ENCODE measurements at regions of chrX and their contacts with region 1.

Region 1: GRCh38 chrX:1246816-1247215 is 21.8 kb upstream of the CSF2RA start:
- DNase-seq: peak; percentile 57
- ATAC-seq: peak; percentile 64
- H3K4me3 ChIP-seq: no peak overlapping the region
- H3K27ac ChIP-seq: no peak overlapping the region
- H3K4me1 ChIP-seq: peaks cover 14% of the 10 kb centered on the region
- H3K27me3 ChIP-seq: no peaks in the 10 kb centered on the region
- CTCF ChIP-seq: peak; percentile 81 to 86 (median 85)
- EP300 ChIP-seq: no peak
- POLR2A ChIP-seq: no peak
- RAD21 ChIP-seq: peak; percentile 96

Region 2: DNA sequence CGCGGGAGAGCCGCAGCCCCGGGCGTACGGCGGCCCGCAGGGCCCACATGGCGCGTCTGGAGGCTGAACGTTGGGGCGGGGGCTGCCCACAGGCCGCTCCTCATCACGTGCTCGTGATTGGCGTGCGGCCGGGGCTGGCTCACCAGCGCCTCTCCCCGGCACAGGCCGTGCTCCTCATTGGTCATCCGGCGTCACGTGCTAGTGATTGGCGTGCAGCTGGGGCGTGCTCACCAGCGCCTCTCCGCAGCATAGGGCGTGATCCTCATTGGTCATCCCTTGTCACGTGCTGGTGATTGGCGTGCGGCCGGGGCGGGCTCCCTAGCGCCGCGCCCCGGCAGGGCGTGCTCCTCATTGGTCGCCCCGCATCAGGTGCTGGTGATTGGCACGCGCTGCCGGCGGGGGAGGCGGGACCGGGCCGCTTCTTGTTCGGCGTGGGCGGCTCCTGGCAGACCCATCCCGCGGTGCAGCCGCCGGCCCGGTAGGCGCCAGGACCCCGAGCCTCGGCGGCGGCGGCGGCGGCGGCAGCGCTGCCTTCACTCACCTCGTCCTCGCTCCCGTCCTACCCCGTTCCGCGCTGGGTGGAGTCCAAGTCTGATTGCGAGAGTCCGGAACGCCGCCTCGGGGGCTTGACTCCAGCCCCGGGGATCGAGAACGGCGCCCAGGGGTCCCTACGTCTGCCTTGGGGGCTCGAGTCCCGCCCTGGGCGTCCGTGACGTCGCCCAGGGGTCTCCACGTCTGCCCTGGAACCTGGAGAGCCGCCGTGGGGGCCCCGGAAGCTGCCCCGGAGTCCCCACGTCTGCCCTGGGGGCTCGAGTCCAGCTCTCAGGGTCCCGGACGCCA is 927.9 kb before region 1 on chrX and contains the start of gene GTPBP6:
- CTCF ChIA-PET with region 1: no interaction called
- POLR2A ChIA-PET with region 1: no interaction called
- RAD21 ChIA-PET with region 1: no interaction called
- SMC1A ChIA-PET with region 1: no interaction called
- in situ Hi-C with region 1: no loop called
- intact Hi-C with region 1: loop called (anchors 10 kb)
- DNase-seq: peak; percentile 99
- ATAC-seq: peak; percentile 84
- H3K4me3 ChIP-seq: peak within 1 kb of the TSS; percentile 86
- H3K27ac ChIP-seq: peak within 1 kb of the TSS; percentile 95
- H3K4me1 ChIP-seq: peaks cover 7% of the 10 kb centered on the region
- H3K27me3 ChIP-seq: no peaks in the 10 kb centered on the region
- CTCF ChIP-seq: peak in 1 of 3 experiments; percentile 35; a peak in 2 of 6 replicates
- EP300 ChIP-seq: no peak
- POLR2A ChIP-seq: peak; percentile 85
- RAD21 ChIP-seq: no peak
- polyA plus RNA-seq, gene GTPBP6: 0.31 to 1.9 TPM

Region 3: DNA sequence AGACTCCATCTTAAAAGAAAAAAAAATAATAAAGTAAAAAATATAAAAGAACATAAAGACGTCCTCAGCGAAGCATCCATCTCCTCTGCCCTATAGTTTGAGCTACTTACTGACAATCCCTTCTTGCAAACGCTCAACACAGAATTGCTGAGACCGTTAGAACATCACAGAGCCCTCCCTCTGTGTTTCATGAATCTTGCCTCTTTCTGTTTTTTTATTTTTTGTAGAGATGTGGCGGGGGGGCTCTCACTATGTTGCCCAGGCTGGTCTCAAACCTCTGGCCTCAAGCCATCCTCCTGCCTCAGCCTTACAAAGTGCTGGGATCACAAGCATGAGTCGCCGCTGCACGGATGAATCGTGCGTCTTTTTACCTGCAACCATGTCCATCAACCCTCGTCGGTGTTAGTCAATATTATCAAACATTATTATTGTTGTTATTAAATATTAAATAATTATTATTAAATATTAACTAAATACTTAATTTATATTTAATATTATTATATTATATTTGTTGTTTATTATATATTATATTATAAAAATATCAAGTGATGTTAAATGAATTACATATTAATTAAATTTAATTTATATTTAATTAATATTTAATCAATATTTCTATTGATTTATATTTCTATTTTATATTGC is 235.1 kb before region 1 on chrX:
- CTCF ChIA-PET with region 1: no interaction called
- POLR2A ChIA-PET with region 1: no interaction called
- RAD21 ChIA-PET with region 1: no interaction called
- SMC1A ChIA-PET with region 1: no interaction called
- in situ Hi-C with region 1: no loop called
- intact Hi-C with region 1: no loop called
- DNase-seq: no peak
- ATAC-seq: no peak
- H3K4me3 ChIP-seq: no peak overlapping the region
- H3K27ac ChIP-seq: no peak overlapping the region
- H3K4me1 ChIP-seq: no peaks in the 10 kb centered on the region
- H3K27me3 ChIP-seq: no peaks in the 10 kb centered on the region
- CTCF ChIP-seq: no peak
- EP300 ChIP-seq: no peak
- POLR2A ChIP-seq: no peak
- RAD21 ChIP-seq: no peak

Region 4: DNA sequence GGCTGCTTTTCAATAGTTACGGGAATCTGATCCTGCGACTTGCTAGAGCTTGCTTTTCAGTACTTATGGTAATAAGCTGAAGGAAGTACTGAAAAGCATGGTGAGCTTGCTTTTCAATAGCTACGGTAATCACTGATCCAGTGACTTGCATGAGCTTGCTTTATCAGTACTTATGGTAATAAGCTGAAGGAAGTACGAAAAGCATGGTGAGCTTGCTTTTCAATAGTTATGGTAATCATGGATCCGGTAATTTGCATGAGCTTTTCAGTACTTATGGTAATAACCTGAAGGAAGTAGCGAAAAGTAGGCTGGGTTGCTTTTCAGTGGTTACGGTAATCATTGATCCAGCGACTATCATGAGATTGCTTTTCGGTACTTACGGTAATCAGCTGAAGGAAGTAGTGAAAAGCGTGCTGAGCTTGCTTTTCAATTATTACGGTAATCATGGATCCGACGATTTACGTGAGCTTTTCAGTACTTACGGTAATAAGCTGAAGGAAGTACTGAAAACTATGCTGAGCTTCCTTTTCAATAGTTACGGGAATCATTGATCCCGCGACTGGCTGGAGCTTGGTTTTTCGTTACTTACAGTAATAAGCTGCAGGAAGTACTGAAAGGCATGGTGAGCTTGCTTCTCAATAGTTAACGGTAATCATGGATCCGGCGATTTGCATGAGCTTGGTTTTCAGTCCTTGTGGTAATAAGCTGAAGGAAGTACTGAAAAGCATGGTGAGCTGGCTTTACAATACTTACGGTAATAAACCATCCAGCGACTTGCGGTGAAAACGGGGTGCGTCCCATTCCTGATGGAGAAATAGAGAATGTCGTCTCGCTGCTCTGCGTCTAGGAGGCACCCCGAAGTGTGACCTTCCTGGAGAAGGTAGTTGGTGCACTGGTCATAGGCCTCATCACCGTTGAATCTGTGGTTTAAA is 40.9 kb before region 1 on chrX:
- CTCF ChIA-PET with region 1: no interaction called
- POLR2A ChIA-PET with region 1: no interaction called
- RAD21 ChIA-PET with region 1: no interaction called
- SMC1A ChIA-PET with region 1: no interaction called
- in situ Hi-C with region 1: no loop called
- intact Hi-C with region 1: loop called (anchors 1 kb)
- DNase-seq: no peak
- ATAC-seq: peak; percentile 39
- H3K4me3 ChIP-seq: peak overlapping the region; percentile 24; the same call in 1 of the 2 replicates
- H3K27ac ChIP-seq: no peak overlapping the region; the same call in 1 of the 2 replicates
- H3K4me1 ChIP-seq: peaks cover 7% of the 10 kb centered on the region; the same call in 1 of the 2 replicates
- H3K27me3 ChIP-seq: no peaks in the 10 kb centered on the region
- CTCF ChIP-seq: no peak
- EP300 ChIP-seq: 0 out of 4 replicates have a peak, but pooled peaks of 1 of the 2 experiments have one; percentile 15
- POLR2A ChIP-seq: no peak
- RAD21 ChIP-seq: no peak

Region 5: DNA sequence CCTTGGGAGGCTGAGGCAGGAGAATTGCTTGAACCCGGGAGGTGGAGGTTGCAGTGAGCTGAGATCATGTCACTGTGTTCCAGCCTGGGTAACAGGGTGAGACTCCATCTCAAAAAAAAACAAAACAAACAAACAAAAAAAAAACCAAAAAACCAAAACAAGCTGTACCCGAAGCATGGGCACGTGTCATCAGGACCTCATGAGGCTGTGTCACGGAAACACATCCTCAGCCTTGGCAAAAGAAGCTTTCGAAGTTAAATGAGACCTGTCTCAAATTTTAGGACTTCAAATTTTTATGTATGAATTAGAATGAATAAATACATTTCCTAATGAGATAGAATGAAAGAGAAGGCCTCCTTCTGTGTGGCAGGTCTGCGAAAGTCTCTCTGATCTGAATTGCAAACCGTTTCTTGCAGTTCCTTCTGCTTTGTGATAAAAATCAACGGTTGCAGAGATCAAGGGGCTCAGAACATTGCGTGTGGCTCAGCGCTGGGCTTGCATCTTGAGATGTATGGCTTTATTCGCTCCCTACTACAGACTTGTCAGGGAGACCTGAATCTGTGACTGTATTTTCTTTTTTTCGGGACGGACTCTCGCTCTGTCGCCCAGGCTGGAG is 14.9 kb before region 1 on chrX:
- CTCF ChIA-PET with region 1: no interaction called
- POLR2A ChIA-PET with region 1: no interaction called
- RAD21 ChIA-PET with region 1: no interaction called
- SMC1A ChIA-PET with region 1: no interaction called
- in situ Hi-C with region 1: no loop called
- intact Hi-C with region 1: no loop called
- DNase-seq: no peak
- ATAC-seq: no peak
- H3K4me3 ChIP-seq: no peak overlapping the region
- H3K27ac ChIP-seq: no peak overlapping the region
- H3K4me1 ChIP-seq: no peaks in the 10 kb centered on the region
- H3K27me3 ChIP-seq: no peaks in the 10 kb centered on the region
- CTCF ChIP-seq: no peak
- EP300 ChIP-seq: no peak
- POLR2A ChIP-seq: no peak
- RAD21 ChIP-seq: no peak

Region 6: GRCh38 chrX:1323315-1323714 is 76.5 kb after region 1 on chrX:
- CTCF ChIA-PET with region 1: no interaction called
- POLR2A ChIA-PET with region 1: no interaction called
- RAD21 ChIA-PET with region 1: no interaction called
- SMC1A ChIA-PET with region 1: no interaction called
- in situ Hi-C with region 1: no loop called
- intact Hi-C with region 1: loop called (anchors 5 kb)
- DNase-seq: peak; percentile 55
- ATAC-seq: peak; percentile 77
- H3K4me3 ChIP-seq: no peak overlapping the region
- H3K27ac ChIP-seq: no peak overlapping the region
- H3K4me1 ChIP-seq: peaks cover 22% of the 10 kb centered on the region
- H3K27me3 ChIP-seq: no peaks in the 10 kb centered on the region
- CTCF ChIP-seq: peak; percentile 55 to 67 (median 60); a peak in 5 of 6 replicates
- EP300 ChIP-seq: no peak
- POLR2A ChIP-seq: no peak
- RAD21 ChIP-seq: peak; percentile 56

Region 7: GRCh38 chrX:1391707-1392375 is 145.0 kb after region 1 on chrX and contains the start of gene SLC25A6:
- CTCF ChIA-PET with region 1: no interaction called
- POLR2A ChIA-PET with region 1: no interaction called
- RAD21 ChIA-PET with region 1: no interaction called
- SMC1A ChIA-PET with region 1: no interaction called
- in situ Hi-C with region 1: no loop called
- intact Hi-C with region 1: loop called (anchors 2 kb)
- DNase-seq: peak; percentile 88
- ATAC-seq: peak; percentile 95
- H3K4me3 ChIP-seq: peak within 1 kb of the TSS; percentile 94
- H3K27ac ChIP-seq: peak within 1 kb of the TSS; percentile 99
- H3K4me1 ChIP-seq: peaks cover 10% of the 10 kb centered on the region
- H3K27me3 ChIP-seq: no peaks in the 10 kb centered on the region
- CTCF ChIP-seq: 0 out of 6 replicates have a peak, but pooled peaks of 1 of the 3 experiments have one; percentile 10
- EP300 ChIP-seq: no peak
- POLR2A ChIP-seq: peak; percentile 97
- RAD21 ChIP-seq: no peak
- polyA plus RNA-seq, gene SLC25A6: 61.9 to 127 TPM